Activated CD8-positive, alpha-beta T cell treated with anti-CD3 and anti-CD28 coated beads for 36 hours (primary cell): ENCODE measurements at regions of chr4 and their contacts with region 1.

Region 1: DNA sequence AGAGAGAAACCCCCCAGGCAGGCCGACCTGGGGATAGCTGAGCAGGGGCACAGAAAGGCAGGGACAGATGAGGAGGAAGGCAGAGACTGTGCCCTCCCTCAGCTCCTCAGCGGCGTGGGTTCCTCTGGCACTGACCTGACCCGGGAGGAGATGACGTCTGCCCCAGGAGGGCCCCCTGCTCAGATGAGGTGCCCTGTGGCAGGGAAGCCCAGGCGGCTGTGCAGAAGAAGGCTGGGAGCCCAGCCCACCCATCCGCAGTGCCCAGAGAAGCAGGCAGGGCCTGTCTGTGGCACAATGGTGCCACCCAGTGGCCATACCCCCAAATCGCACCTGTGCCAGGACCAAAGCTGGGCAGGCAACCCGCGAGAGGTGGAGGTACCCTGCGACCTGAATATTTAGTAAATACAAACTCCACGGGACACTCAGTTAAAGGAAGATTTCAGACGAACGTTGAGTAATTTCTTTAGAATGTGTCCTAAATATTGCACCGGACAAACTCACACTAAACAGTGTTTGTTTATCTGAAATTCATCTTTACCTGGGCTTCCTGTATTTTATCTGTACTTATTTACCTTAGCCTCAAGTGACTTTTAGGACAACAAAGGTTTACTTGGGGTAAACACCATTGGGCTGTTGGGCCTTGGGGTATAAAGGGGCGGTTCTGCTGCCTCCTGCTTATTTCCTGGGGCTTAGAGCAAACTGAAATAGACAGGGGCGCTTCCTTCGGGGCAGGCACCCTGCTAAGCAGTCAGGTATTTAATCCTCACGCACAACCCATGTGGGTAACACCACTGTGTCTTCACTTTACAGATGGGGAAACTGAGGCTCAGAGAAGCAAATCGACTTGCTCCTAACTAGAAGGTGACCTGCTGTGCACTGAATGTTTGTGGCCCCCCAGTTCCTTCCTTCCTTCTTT is 46.5 kb upstream of the HMX1 start:
- DNase-seq: peak; percentile 74
- ATAC-seq: peak; percentile 91
- H3K4me3 Mint-ChIP-seq: no peak overlapping the region
- H3K27ac Mint-ChIP-seq: no peak overlapping the region
- H3K4me1 Mint-ChIP-seq: no peaks in the 10 kb centered on the region
- H3K27me3 Mint-ChIP-seq: peaks cover 1% of the 10 kb centered on the region
- CTCF ChIP-seq: peak; percentile 83

Region 2: GRCh38 chr4:8607603-8608481 is 310.3 kb before region 1 on chr4:
- CTCF ChIA-PET with region 1: interaction called, 5 read pairs
- POLR2A ChIA-PET with region 1: no interaction called
- intact Hi-C with region 1: loop called (anchors 10 kb)
- DNase-seq: peak; percentile 53
- ATAC-seq: peak; percentile 68
- H3K4me3 Mint-ChIP-seq: no peak overlapping the region
- H3K27ac Mint-ChIP-seq: no peak overlapping the region
- H3K4me1 Mint-ChIP-seq: no peaks in the 10 kb centered on the region
- H3K27me3 Mint-ChIP-seq: no peaks in the 10 kb centered on the region
- CTCF ChIP-seq: peak; percentile 99

Region 3: GRCh38 chr4:8688041-8688937 is 229.8 kb before region 1 on chr4:
- CTCF ChIA-PET with region 1: interaction called, 3 read pairs
- POLR2A ChIA-PET with region 1: no interaction called
- intact Hi-C with region 1: loop called (anchors 10 kb)
- DNase-seq: peak; percentile 29
- ATAC-seq: peak; percentile 62
- H3K4me3 Mint-ChIP-seq: no peak overlapping the region
- H3K27ac Mint-ChIP-seq: no peak overlapping the region
- H3K4me1 Mint-ChIP-seq: no peaks in the 10 kb centered on the region
- H3K27me3 Mint-ChIP-seq: peaks cover 6% of the 10 kb centered on the region
- CTCF ChIP-seq: peak; percentile 72